ENCODE measurements at regions of chr10 and their contacts with region 1.

Region 1: DNA sequence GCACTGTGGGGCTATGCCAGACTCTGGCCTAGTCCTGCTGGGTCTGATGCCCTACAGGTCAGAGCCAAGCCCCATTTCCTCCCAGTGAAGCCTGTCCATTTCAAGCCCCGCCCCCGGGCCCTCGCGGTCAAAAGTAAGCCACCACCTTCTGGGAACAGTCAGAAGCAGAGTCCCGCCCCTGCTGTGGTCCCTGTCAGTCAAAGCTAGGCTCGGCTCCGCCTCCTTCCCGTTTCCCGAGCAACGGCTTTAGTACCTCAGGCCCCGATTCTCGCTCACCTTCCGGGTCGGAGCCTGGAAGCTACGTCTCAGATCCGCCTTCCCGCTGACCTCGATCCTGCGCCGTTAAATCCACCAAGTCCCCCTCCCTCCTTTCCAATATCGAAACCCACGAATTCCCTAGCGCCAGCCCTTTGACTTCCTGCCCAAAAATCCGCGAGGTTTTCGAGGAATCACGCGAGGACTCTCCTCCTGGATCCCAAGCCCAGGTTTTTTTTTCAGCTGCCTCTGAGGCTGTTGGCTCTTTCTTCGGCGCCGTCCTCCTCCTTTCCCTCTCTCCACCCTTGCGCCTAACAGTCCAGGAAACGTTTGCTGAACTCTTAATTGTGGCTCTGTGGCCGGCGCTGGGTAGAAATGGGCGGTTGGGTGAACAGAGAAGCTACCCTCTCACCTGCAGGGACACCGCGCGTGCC is 11.8 kb downstream of the SFXN3 start:
- DNase-seq: peak; percentile 97
- ATAC-seq: peak; percentile 97
- H3K4me3 ChIP-seq: peak overlapping the region; percentile 64 to 69
- H3K27ac ChIP-seq: peak overlapping the region; percentile 99
- H3K4me1 ChIP-seq: peaks cover 25% of the 10 kb centered on the region
- H3K27me3 ChIP-seq: no peaks in the 10 kb centered on the region
- CTCF ChIP-seq: no peak

Region 2: DNA sequence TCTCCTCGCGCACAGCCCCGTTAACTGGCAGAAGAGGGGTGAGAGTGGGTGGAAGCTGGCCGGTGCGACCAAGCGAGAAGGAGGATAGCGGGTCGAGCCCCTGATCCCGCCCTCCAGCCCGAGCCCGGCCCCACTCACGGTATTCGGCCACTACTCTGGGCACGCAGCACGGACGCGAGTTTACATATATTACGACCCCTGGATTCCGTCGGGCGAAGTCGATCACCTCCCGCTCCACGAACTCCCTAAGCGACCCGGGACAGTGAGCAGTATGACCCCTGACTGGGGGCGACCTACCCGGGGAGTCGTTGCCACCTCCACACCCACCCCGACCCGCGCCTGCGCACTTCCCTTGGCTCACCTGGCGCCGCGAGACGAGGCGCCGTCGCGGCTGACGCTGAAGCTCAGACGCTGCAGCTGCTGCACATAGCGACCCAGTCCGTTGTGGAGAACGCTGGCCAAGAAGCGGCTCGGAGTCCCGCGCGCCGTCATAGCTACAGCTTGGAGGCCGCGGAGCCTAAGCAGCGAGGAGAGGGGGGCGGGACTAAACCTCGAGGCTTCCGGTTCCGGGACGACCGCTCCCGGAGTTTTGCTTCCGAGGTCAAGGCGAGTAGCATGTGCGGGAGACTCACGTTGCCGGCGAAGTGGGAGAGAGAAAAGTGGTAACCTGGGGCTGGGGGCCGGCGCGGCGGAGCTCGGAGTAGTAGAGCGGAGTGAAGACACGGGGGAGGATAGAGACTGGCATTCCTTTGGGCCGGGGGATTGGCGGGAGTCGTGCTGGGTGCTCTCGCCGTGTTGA is 55.7 kb before region 1 on chr10 and contains the starts of genes MRPL43 and TWNK:
- CTCF ChIA-PET with region 1: interaction called, 17 read pairs
- POLR2A ChIA-PET with region 1: no interaction called
- in situ Hi-C with region 1: no loop called
- intact Hi-C with region 1: no loop called
- DNase-seq: no peak
- ATAC-seq: peak; percentile 95
- H3K4me3 ChIP-seq: peak within 1 kb of the TSS; percentile 84 to 98
- H3K27ac ChIP-seq: peak within 1 kb of the TSS; percentile 95
- H3K4me1 ChIP-seq: peaks cover 30% of the 10 kb centered on the region
- H3K27me3 ChIP-seq: no peaks in the 10 kb centered on the region
- CTCF ChIP-seq: no peak
- total RNA-seq, gene MRPL43: 108 TPM
- total RNA-seq, gene TWNK: 30.5 TPM

Region 3: DNA sequence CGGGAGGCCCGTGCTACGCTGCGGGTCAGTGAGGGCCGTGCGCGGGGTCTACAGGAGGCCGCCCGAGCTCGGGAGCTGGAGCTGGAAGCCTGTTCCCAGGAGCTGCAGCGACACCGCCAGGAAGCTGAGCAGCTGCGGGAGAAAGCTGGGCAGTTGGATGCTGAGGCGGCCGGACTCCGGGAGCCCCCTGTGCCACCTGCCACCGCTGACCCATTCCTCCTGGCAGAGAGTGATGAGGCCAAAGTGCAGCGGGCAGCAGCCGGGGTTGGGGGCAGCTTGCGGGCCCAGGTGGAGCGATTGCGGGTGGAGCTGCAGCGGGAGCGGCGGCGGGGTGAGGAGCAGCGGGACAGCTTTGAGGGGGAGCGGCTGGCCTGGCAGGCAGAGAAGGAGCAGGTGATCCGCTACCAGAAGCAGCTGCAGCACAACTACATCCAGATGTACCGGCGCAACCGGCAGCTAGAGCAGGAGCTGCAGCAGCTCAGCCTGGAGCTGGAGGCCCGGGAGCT is 36.2 kb before region 1 on chr10:
- CTCF ChIA-PET with region 1: interaction called, 19 read pairs
- POLR2A ChIA-PET with region 1: no interaction called
- in situ Hi-C with region 1: no loop called
- intact Hi-C with region 1: no loop called
- DNase-seq: no peak
- ATAC-seq: no peak
- H3K4me3 ChIP-seq: no peak overlapping the region
- H3K27ac ChIP-seq: no peak overlapping the region
- H3K4me1 ChIP-seq: peaks cover 10% of the 10 kb centered on the region
- H3K27me3 ChIP-seq: no peaks in the 10 kb centered on the region
- CTCF ChIP-seq: no peak

Region 4: GRCh38 chr10:101060036-101060950 is 17.5 kb after region 1 on chr10:
- CTCF ChIA-PET with region 1: interaction called, 19 read pairs
- POLR2A ChIA-PET with region 1: interaction called, 4 read pairs
- in situ Hi-C with region 1: no loop called
- intact Hi-C with region 1: no loop called
- DNase-seq: peak; percentile 86
- ATAC-seq: peak; percentile 72
- H3K4me3 ChIP-seq: peak overlapping the region; percentile 76 to 77
- H3K27ac ChIP-seq: peak overlapping the region; percentile 99
- H3K4me1 ChIP-seq: peaks cover 44% of the 10 kb centered on the region
- H3K27me3 ChIP-seq: no peaks in the 10 kb centered on the region
- CTCF ChIP-seq: peak; percentile 98

Region 5: DNA sequence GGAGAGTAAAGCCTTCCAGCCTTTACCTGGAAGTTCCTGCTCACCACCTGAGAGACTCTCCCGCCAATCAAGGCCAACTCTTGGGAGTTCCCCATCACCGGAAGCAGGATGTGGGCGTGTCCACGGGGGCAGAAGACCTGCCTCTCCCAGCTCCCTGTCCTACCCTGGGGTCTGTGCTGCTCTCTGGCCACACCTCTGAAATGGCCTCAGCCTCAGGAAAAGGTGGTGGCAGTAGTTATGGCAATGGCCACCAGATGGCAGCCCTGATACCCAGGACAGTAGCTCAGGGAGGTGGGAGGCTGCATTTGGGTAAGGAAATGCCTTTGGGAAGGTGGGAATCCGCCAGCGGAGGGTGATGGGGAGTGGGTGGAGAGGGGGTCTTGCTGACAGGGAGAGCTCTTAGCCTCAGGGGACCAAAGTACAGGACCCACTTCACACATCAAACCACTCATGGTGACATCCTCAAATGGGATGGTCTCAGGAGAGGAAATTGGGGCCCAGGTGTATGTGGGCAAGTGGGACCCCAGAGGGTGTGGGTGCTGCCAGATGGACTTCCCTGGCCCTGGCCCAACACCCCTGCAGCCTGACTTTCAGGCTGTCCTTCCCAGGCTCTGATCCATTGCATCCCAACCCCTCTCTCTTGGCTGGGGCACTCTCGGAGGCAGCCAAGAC is 52.9 kb after region 1 on chr10:
- CTCF ChIA-PET with region 1: interaction called, 25 read pairs
- POLR2A ChIA-PET with region 1: no interaction called
- in situ Hi-C with region 1: no loop called
- intact Hi-C with region 1: no loop called
- DNase-seq: peak; percentile 50
- ATAC-seq: peak; percentile 87
- H3K4me3 ChIP-seq: no peak overlapping the region
- H3K27ac ChIP-seq: no peak overlapping the region
- H3K4me1 ChIP-seq: no peaks in the 10 kb centered on the region
- H3K27me3 ChIP-seq: no peaks in the 10 kb centered on the region
- CTCF ChIP-seq: peak; percentile 96

Region 6: GRCh38 chr10:101130984-101131961 is 88.5 kb after region 1 on chr10 and contains the start of gene TLX1:
- CTCF ChIA-PET with region 1: interaction called, 10 read pairs
- POLR2A ChIA-PET with region 1: no interaction called
- in situ Hi-C with region 1: no loop called
- intact Hi-C with region 1: no loop called
- DNase-seq: no peak
- ATAC-seq: peak; percentile 57
- H3K4me3 ChIP-seq: peak within 1 kb of the TSS; percentile 37 to 45
- H3K27ac ChIP-seq: no peak within 1 kb of the TSS
- H3K4me1 ChIP-seq: no peaks in the 10 kb centered on the region; the same call in 1 of the 2 replicates
- H3K27me3 ChIP-seq: peaks cover 23% of the 10 kb centered on the region
- CTCF ChIP-seq: no peak
- total RNA-seq, gene TLX1: 0.13 TPM

Region 7: GRCh38 chr10:101311185-101312066 is 268.6 kb after region 1 on chr10:
- CTCF ChIA-PET with region 1: interaction called, 18 read pairs
- POLR2A ChIA-PET with region 1: no interaction called
- in situ Hi-C with region 1: no loop called
- intact Hi-C with region 1: no loop called
- DNase-seq: no peak
- ATAC-seq: peak; percentile 60
- H3K4me3 ChIP-seq: peak overlapping the region in 1 of 2 experiments; percentile 10; a peak in 1 of 4 replicates
- H3K27ac ChIP-seq: no peak overlapping the region
- H3K4me1 ChIP-seq: peaks cover 5% of the 10 kb centered on the region
- H3K27me3 ChIP-seq: peaks cover 18% of the 10 kb centered on the region
- CTCF ChIP-seq: no peak

Region 8: DNA sequence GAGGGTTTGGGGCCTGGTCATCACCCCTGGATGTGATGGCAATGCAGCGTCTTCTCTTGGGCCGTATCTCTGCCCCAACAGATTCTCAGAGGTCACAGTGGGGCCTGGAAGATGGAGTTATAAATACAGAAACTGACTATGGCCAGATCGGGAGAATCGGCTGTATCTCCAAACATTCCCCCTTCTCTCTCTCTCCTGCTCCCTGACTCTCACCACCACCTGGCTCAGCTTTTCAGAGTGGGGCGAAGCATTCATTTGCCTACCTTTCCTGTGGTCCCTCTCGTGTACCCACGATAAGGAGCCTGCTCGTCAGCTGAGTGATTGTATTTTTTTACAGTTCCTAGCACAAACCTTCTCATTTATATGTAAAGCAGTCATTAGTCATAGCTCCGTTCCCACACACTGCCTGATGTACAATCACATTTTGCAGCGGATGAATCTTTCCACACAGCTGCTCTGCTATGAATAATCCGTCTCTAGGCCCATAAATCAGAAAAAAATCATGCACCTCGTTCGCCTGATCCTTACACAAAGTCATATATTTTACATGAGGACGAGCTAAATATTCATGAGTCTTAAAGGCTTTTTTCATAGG is 287.9 kb after region 1 on chr10:
- CTCF ChIA-PET with region 1: no interaction called
- POLR2A ChIA-PET with region 1: no interaction called
- in situ Hi-C with region 1: no loop called
- intact Hi-C with region 1: no loop called
- DNase-seq: no peak
- ATAC-seq: no peak
- H3K4me3 ChIP-seq: no peak overlapping the region
- H3K27ac ChIP-seq: no peak overlapping the region
- H3K4me1 ChIP-seq: no peaks in the 10 kb centered on the region
- H3K27me3 ChIP-seq: peaks cover 9% of the 10 kb centered on the region
- CTCF ChIP-seq: no peak

Measured in Panc1 (cell line).